CD14-positive monocyte (primary cell): ENCODE measurements at regions of chr16 and their contacts with region 1.

Region 1: GRCh38 chr16:84643180-84643583 is 5.1 kb upstream of the KLHL36 start:
- DNase-seq: peak; percentile 44 to 53 (median 44)
- H3K4me3 ChIP-seq: no peak overlapping the region
- H3K4me3 Mint-ChIP-seq: peak overlapping the region in 1 of 2 donors; percentile 59
- H3K27ac ChIP-seq: peak overlapping the region; percentile 56 to 63
- H3K27ac Mint-ChIP-seq: peak overlapping the region; percentile 53 to 91 (median 87)
- H3K4me1 ChIP-seq: peaks cover 52 to 53% of the 10 kb centered on the region in 2 donors
- H3K4me1 Mint-ChIP-seq: peaks cover 57% of the 10 kb centered on the region
- H3K27me3 ChIP-seq: no peaks in the 10 kb centered on the region
- H3K27me3 Mint-ChIP-seq: peaks cover 0 to 7% (median 4%) of the 10 kb centered on the region in 3 donors
- CTCF ChIP-seq: no peak

Region 2: DNA sequence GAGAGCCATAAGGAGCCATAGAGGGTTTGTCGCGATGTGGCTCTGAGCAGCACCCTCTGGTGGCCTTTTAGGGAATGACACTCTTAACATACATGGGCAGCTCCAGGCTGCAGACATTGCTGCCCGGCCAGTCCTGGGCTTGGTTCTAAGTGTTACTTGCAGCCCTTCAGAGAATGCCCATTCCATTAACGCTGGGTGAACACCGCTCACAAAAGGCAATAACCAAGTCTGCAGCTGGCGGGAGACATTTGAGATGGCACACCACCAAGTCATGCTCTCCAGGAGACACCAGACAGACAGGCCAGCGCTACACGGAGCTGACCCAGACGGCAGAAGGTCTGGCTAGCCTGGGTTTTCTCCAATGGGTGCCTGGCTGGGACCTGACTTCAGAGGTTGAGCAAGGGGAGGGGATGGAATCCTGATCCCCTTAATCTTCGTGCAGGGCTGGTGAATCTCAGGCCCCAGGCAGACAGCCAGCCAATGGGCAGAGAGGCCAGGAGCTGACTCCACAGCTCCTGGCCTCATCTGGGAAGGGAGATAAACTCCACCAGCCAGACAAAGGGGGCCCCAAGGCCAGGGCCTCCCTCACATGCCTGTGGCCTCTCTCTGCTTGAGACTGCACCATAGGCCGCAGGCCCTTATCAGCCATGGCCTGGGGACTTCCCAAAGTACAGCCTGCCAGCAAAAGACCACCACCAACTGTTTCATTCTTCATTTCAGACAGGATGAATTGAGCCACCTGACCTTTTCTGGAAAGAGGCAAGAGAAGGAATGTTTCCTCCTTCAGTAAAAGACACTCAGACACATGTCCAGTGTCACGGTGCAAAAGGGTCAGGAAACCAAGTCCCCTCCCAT is 309.4 kb after region 1 on chr16:
- intact Hi-C with region 1: loop called in 1 of 2 experiments (anchors 5 kb)
- DNase-seq: peak; percentile 76 to 84 (median 81)
- H3K4me3 ChIP-seq: peak overlapping the region in 1 of 3 experiments; percentile 23
- H3K4me3 Mint-ChIP-seq: peak overlapping the region; percentile 63 to 67
- H3K27ac ChIP-seq: no peak overlapping the region
- H3K27ac Mint-ChIP-seq: peak overlapping the region in 2 of 7 donors; percentile 25 to 26
- H3K4me1 ChIP-seq: peaks cover 21 to 36% of the 10 kb centered on the region in 2 donors
- H3K4me1 Mint-ChIP-seq: peaks cover 33% of the 10 kb centered on the region
- H3K27me3 ChIP-seq: peaks cover 0 to 3% of the 10 kb centered on the region in 2 donors
- H3K27me3 Mint-ChIP-seq: peaks cover 0 to 6% (median 0%) of the 10 kb centered on the region in 3 donors
- CTCF ChIP-seq: peak; percentile 90